ENCODE measurements at regions of chr1 and their contacts with region 1.

Region 1: GRCh38 chr1:184075055-184076029 is 23.8 kb downstream of the TSEN15 start:
- DNase-seq: no peak
- ATAC-seq: peak; percentile 89

Region 2: GRCh38 chr1:184222652-184223052 is 147.3 kb after region 1 on chr1:
- intact Hi-C with region 1: loop called (anchors 2 kb)
- DNase-seq: peak; percentile 56
- ATAC-seq: peak; percentile 76

Measured in left ventricle myocardium superior (tissue), 1 donor.